ENCODE measurements at regions of chr12 and their contacts with region 1.

Region 1: GRCh38 chr12:97308576-97309198 is 153.9 kb upstream of the RMST start:
- DNase-seq: peak in 4 of 5 donors; percentile 42 to 55 (median 49)
- H3K4me3 ChIP-seq: no peak overlapping the region
- H3K4me3 Mint-ChIP-seq: no peak overlapping the region
- H3K27ac ChIP-seq: no peak overlapping the region
- H3K27ac Mint-ChIP-seq: no peak overlapping the region
- H3K4me1 ChIP-seq: no peaks in the 10 kb centered on the region
- H3K4me1 Mint-ChIP-seq: peaks cover 0 to 3% (median under 1%) of the 10 kb centered on the region in 4 donors
- H3K27me3 ChIP-seq: no peaks in the 10 kb centered on the region
- H3K27me3 Mint-ChIP-seq: peaks cover 1 to 12% of the 10 kb centered on the region in 2 donors

Region 2: DNA sequence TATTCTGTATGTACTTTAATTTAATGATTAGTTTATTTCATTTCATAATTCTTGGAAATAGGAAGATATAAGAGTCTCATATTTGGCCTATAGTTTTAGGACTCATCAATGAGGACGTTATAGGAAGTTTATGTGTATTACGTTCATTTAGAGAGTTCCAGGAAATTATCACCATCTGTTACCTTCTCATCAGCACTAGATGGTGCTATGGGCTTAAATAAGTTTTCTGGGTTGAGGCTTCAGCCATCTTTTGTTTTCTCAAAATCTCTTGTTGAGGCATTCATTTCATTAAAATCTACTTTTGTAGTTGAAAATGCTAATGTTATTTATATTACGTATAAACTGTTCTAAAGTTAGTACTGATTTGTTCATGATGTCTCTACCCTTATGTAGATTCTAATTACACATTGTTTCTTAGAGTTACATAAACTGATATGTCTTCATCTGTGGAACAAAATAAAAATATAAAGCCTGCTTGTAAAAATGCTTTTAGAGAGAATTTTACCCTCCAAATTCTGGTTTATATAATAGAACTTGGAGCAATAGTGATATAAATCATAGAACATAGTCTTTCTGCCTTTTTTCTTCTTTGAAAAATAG is 730.1 kb before region 1 on chr12:
- CTCF ChIA-PET with region 1: interaction called, 76 read pairs
- POLR2A ChIA-PET with region 1: no interaction called
- intact Hi-C with region 1: no loop called
- DNase-seq: peak; percentile 31 to 64 (median 55)
- H3K4me3 ChIP-seq: no peak overlapping the region
- H3K4me3 Mint-ChIP-seq: no peak overlapping the region
- H3K27ac ChIP-seq: no peak overlapping the region
- H3K27ac Mint-ChIP-seq: peak overlapping the region in 1 of 7 donors; percentile 43
- H3K4me1 ChIP-seq: no peaks in the 10 kb centered on the region
- H3K4me1 Mint-ChIP-seq: peaks cover 0 to 4% (median 0%) of the 10 kb centered on the region in 4 donors
- H3K27me3 ChIP-seq: no peaks in the 10 kb centered on the region
- H3K27me3 Mint-ChIP-seq: peaks cover 0 to 2% of the 10 kb centered on the region in 2 donors

Region 3: GRCh38 chr12:97321621-97322020 is 12.9 kb after region 1 on chr12:
- CTCF ChIA-PET with region 1: interaction called, 36 read pairs
- POLR2A ChIA-PET with region 1: no interaction called
- intact Hi-C with region 1: no loop called
- DNase-seq: no peak
- H3K4me3 ChIP-seq: no peak overlapping the region
- H3K4me3 Mint-ChIP-seq: no peak overlapping the region
- H3K27ac ChIP-seq: no peak overlapping the region
- H3K27ac Mint-ChIP-seq: no peak overlapping the region
- H3K4me1 ChIP-seq: no peaks in the 10 kb centered on the region
- H3K4me1 Mint-ChIP-seq: no peaks in the 10 kb centered on the region
- H3K27me3 ChIP-seq: no peaks in the 10 kb centered on the region
- H3K27me3 Mint-ChIP-seq: peaks cover 8 to 20% of the 10 kb centered on the region in 2 donors